ENCODE measurements at regions of chr2 and their contacts with region 1.

Region 1: DNA sequence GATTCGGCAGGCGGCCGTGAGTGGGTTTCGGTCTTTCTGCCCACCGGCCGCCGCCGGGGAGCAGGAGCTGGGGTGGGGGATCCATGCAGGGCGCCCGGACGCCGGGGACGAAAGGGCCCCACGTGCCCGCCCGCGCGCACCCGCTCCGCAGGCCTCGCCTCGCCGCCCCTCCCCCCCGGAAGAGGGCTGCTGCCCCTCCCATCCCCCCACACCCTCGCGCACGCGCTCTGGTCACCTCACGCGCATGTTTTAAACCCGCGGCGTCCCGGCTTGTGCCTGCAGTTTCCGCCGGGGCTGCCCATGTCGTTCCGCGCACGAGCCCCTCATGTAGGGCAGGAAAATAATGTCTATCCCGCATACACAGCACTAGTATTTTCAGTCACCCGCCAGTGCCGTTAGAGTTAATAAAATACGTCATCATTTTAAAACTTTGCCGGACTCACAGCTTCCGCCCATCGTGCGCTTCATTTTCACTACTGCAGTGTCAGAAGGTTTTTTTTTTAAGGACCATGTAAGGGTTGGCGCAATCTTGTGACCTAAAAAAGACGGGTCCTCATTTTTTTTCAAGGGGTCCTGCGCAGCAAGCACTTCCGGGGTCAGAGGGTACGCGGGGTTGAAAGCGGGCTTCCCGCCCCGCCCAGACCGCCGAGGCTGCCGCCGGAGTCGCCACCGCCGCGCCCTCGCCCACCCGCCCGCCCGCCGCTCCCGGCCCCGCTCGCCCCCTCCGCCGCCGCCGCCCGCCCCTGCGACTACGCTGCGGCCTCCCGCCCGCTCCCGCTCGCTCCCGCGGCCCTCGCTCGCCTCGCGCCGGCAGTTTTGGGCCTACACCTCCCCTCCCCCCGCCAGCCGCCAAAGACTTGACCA is at the start of gene PCBP1:
- DNase-seq: peak; percentile 96
- H3K4me3 Mint-ChIP-seq: peak within 1 kb of the TSS; percentile 97
- H3K27ac Mint-ChIP-seq: peak within 1 kb of the TSS; percentile 100
- H3K4me1 Mint-ChIP-seq: peaks cover 50% of the 10 kb centered on the region
- H3K27me3 Mint-ChIP-seq: no peaks in the 10 kb centered on the region
- total RNA-seq, gene PCBP1: 363 to 374 TPM

Region 2: GRCh38 chr2:68766376-68766845 is 1320.7 kb before region 1 on chr2:
- CTCF ChIA-PET with region 1: no interaction called
- intact Hi-C with region 1: loop called (anchors 10 kb)
- DNase-seq: peak; percentile 77
- H3K4me3 Mint-ChIP-seq: peak overlapping the region; percentile 77
- H3K27ac Mint-ChIP-seq: peak overlapping the region; percentile 95
- H3K4me1 Mint-ChIP-seq: peaks cover 97% of the 10 kb centered on the region
- H3K27me3 Mint-ChIP-seq: no peaks in the 10 kb centered on the region

Region 3: GRCh38 chr2:69957965-69958364 is 129.1 kb before region 1 on chr2:
- CTCF ChIA-PET with region 1: no interaction called
- intact Hi-C with region 1: no loop called
- DNase-seq: no peak
- H3K4me3 Mint-ChIP-seq: no peak overlapping the region
- H3K27ac Mint-ChIP-seq: no peak overlapping the region
- H3K4me1 Mint-ChIP-seq: no peaks in the 10 kb centered on the region
- H3K27me3 Mint-ChIP-seq: no peaks in the 10 kb centered on the region

Region 4: DNA sequence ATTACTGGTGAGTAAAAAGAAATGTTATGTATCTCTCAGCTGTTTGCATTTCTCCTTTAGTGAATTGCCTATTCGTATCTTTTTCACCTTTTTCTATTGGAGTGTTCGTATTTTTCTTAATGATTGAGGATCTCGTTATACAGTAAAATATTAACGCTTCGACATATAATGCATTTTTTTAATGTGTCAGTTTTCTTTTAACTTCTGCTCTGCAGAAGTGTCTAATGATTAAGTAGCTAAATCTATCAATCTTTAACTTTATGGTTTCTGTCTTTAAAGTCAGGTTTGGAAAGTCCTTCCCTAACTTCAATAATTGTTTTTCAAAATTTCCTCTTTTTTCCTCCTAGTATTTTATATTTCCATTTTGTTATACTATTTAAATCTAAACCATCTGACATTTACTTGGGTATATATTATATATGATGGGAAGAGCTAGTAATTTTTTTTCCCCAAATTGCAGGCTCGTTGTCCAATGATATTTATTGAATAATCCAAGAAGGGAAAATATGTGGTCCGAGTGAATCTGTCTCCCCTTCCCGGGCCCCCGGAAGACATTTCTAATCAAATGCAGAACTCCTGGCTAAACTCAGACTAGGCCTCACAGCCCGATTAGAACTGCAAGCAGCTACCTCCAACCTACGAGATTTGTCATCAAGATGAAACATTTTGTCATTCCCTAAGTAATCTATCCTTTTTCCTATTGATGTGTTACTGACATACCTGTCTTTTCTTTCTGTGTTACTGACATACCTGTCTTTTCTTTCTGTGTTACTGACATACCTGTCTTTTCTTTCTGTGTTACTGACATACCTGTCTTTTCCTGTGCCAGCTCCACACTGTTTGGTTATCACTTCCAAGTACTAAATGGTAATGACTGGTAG is 17.4 kb after region 1 on chr2:
- CTCF ChIA-PET with region 1: interaction called, 5 read pairs
- intact Hi-C with region 1: loop called (anchors 1 kb)
- DNase-seq: peak; percentile 81
- H3K4me3 Mint-ChIP-seq: peak overlapping the region; percentile 72
- H3K27ac Mint-ChIP-seq: peak overlapping the region; percentile 93
- H3K4me1 Mint-ChIP-seq: peaks cover 58% of the 10 kb centered on the region
- H3K27me3 Mint-ChIP-seq: no peaks in the 10 kb centered on the region

Region 5: GRCh38 chr2:70132244-70133126 is 45.4 kb after region 1 on chr2:
- CTCF ChIA-PET with region 1: interaction called, 13 read pairs
- intact Hi-C with region 1: loop called (anchors 1 kb)
- DNase-seq: peak; percentile 63
- H3K4me3 Mint-ChIP-seq: peak overlapping the region; percentile 88
- H3K27ac Mint-ChIP-seq: peak overlapping the region; percentile 99
- H3K4me1 Mint-ChIP-seq: peaks cover 77% of the 10 kb centered on the region
- H3K27me3 Mint-ChIP-seq: no peaks in the 10 kb centered on the region

Region 6: GRCh38 chr2:70248181-70248847 is 161.2 kb after region 1 on chr2 and contains the start of gene TIA1:
- CTCF ChIA-PET with region 1: no interaction called
- intact Hi-C with region 1: loop called (anchors 1 kb)
- DNase-seq: peak; percentile 99
- H3K4me3 Mint-ChIP-seq: peak within 1 kb of the TSS; percentile 99
- H3K27ac Mint-ChIP-seq: peak within 1 kb of the TSS; percentile 98
- H3K4me1 Mint-ChIP-seq: peaks cover 32% of the 10 kb centered on the region
- H3K27me3 Mint-ChIP-seq: no peaks in the 10 kb centered on the region
- total RNA-seq, gene TIA1: 83.2 to 83.9 TPM